ENCODE measurements at regions of chr3 and their contacts with region 1.

Region 1: GRCh38 chr3:170760194-170760526 is 109.8 kb downstream of the RPL22L1 start:
- DNase-seq: no peak
- H3K4me3 ChIP-seq: no peak overlapping the region
- CTCF ChIP-seq: no peak

Region 2: DNA sequence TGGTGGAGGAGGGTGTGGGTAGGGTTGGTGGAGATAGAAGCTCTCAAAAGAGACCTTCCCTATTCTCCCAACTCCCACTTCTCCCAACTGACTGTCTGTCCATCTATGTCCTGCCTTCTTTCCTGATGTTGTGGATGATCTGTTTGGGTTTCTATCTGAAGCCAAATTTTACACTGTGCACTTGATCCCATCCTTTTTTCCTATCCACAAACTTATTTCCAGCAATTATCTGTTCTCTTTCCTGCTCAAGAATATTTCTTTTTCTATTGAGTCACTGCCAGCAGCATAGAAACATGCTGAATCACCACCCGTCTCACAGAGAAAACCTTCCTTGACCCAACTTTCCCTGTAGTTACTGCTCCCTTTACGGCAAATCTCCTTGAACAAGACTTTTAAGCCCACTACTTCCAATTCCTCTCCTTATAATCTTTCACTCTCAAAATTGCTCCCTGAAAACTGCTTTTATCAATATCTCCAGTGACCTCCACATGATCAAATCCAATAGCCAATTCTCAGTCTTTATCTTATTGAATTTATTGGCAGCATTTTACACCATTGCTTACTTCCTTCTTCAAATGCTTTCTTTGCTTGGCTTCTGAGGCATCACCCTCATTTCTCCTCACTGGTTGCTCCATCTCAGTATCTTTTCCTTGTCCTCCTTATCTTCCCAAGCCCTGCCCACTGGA is 33.0 kb before region 1 on chr3:
- in situ Hi-C with region 1: loop called (anchors 5 kb)
- DNase-seq: peak; percentile 80
- H3K4me3 ChIP-seq: no peak overlapping the region
- CTCF ChIP-seq: no peak

Region 3: GRCh38 chr3:171001957-171002694 is 242.0 kb after region 1 on chr3:
- in situ Hi-C with region 1: no loop called
- DNase-seq: no peak
- H3K4me3 ChIP-seq: no peak overlapping the region
- CTCF ChIP-seq: no peak

Measured in astrocyte of the cerebellum (primary cell).